HepG2 (cell line): ENCODE measurements at regions of chr16 and their contacts with region 1.

Region 1: GRCh38 chr16:14475370-14476139 is 154.5 kb downstream of the PARN start:
- DNase-seq: peak; percentile 91
- ATAC-seq: peak; percentile 99
- H3K4me3 ChIP-seq: no peak overlapping the region; a peak in 1 of 6 replicates
- H3K27ac ChIP-seq: peak overlapping the region; percentile 58
- H3K4me1 ChIP-seq: peaks cover 51% of the 10 kb centered on the region
- H3K27me3 ChIP-seq: no peaks in the 10 kb centered on the region
- CTCF ChIP-seq: no peak
- EP300 ChIP-seq: peak in 1 of 2 experiments; percentile 39; a peak in 1 of 4 replicates
- POLR2A ChIP-seq: peak in 1 of 2 experiments; percentile 31; a peak in 1 of 4 replicates
- RAD21 ChIP-seq: peak; percentile 21; the same call in 1 of the 2 replicates

Region 2: GRCh38 chr16:14202697-14203096 is 272.9 kb before region 1 on chr16:
- CTCF ChIA-PET with region 1: no interaction called
- POLR2A ChIA-PET with region 1: no interaction called
- in situ Hi-C with region 1: no loop called
- intact Hi-C with region 1: no loop called
- DNase-seq: peak; percentile 54
- ATAC-seq: peak; percentile 82
- H3K4me3 ChIP-seq: no peak overlapping the region
- H3K27ac ChIP-seq: peak overlapping the region; percentile 0
- H3K4me1 ChIP-seq: peaks cover 19% of the 10 kb centered on the region
- H3K27me3 ChIP-seq: no peaks in the 10 kb centered on the region
- CTCF ChIP-seq: no peak
- EP300 ChIP-seq: no peak
- POLR2A ChIP-seq: no peak
- RAD21 ChIP-seq: no peak

Region 3: DNA sequence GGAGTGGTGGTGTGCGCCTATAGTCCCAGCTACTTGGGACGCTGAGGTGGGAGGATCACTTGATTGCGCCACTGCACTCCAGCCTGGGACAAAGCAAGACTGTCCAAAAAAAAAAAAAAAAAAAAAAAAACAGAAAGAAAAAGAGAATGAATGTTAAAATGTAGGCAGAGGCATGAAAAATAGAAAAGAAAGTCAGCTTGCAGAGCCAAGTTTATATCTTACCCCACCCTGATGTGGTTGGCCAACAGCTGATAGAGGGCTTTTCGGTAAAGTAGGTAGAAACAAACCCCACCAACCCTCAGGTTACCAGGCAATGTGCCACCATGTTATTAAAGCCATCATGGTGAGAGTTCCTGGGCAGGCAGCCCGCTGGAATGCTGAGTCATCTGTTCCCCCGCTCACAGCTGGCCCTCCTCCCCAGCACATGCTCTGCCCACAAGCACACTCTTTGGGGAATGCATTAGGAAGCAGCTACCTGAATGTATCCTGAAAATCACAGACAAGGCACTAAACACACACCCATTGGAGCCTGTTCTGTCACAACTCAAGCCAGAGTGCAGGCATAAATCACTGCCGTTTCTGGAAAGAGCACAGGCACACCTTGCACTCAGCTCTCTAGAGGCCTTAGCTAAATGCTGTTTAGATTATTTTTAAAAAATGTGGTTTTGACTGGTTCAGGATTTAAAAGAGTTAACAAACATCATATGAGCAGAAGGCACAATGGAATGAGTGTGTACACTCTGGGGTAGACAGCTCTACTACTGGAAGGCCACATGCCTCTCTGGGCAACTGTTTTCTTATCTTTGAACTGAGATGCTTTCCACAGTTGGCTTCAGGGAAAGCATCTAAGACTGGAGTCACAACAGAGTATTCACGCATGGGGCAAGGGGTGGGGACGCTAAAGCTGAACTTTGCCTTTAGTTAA is 26.0 kb after region 1 on chr16:
- CTCF ChIA-PET with region 1: no interaction called
- POLR2A ChIA-PET with region 1: interaction called, 14 read pairs
- in situ Hi-C with region 1: no loop called
- intact Hi-C with region 1: no loop called
- DNase-seq: peak; percentile 92
- ATAC-seq: peak; percentile 73
- H3K4me3 ChIP-seq: peak overlapping the region in 2 of 3 experiments; percentile 6 to 40; a peak in 2 of 6 replicates
- H3K27ac ChIP-seq: peak overlapping the region; percentile 75
- H3K4me1 ChIP-seq: peaks cover 99% of the 10 kb centered on the region
- H3K27me3 ChIP-seq: no peaks in the 10 kb centered on the region
- CTCF ChIP-seq: no peak
- EP300 ChIP-seq: peak in 1 of 2 experiments; percentile 70; a peak in 2 of 4 replicates
- POLR2A ChIP-seq: 0 out of 4 replicates have a peak, but pooled peaks of 1 of the 2 experiments have one; percentile 22
- RAD21 ChIP-seq: peak; percentile 16; the same call in 1 of the 2 replicates

Region 4: DNA sequence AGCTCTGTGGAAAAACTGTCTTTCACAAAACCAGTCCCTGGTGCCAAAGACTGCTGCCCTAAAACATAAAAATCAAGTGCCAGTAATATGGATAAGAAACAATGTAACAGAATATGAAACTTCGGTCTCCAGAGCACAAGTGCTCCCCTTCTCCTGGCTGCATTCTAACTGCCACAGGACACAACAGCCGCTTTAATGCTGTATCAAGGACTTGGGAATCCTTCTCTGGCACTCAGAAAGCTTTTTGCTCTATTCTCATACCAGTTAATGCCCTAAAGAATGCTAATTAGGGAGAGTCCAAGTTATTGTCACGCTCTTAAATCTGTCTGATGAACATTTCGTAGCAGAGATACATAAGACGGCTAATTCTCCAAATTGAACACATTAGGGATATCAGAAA is 63.6 kb after region 1 on chr16:
- CTCF ChIA-PET with region 1: no interaction called
- POLR2A ChIA-PET with region 1: no interaction called
- in situ Hi-C with region 1: no loop called
- intact Hi-C with region 1: no loop called
- DNase-seq: no peak
- ATAC-seq: no peak
- H3K4me3 ChIP-seq: no peak overlapping the region
- H3K27ac ChIP-seq: no peak overlapping the region
- H3K4me1 ChIP-seq: peaks cover 17% of the 10 kb centered on the region
- H3K27me3 ChIP-seq: no peaks in the 10 kb centered on the region
- CTCF ChIP-seq: no peak
- EP300 ChIP-seq: no peak
- POLR2A ChIP-seq: no peak
- RAD21 ChIP-seq: no peak